ENCODE measurements at regions of chr12 and their contacts with region 1.

Region 1: GRCh38 chr12:107093417-107094182 is at the start of gene CRY1:
- DNase-seq: peak; percentile 85 to 99 (median 92)
- ATAC-seq: peak; percentile 82 to 84
- H3K4me3 Mint-ChIP-seq: no peak within 1 kb of the TSS
- H3K27ac Mint-ChIP-seq: peak within 1 kb of the TSS in 1 of 10 donors; percentile 100
- H3K4me1 Mint-ChIP-seq: peaks cover 0 to 20% (median 13%) of the 10 kb centered on the region in 4 donors
- H3K27me3 Mint-ChIP-seq: peaks cover 3 to 16% (median 9%) of the 10 kb centered on the region in 5 donors
- polyA plus RNA-seq, gene CRY1: 26.1 to 30.7 (median 26.5) TPM

Region 2: DNA sequence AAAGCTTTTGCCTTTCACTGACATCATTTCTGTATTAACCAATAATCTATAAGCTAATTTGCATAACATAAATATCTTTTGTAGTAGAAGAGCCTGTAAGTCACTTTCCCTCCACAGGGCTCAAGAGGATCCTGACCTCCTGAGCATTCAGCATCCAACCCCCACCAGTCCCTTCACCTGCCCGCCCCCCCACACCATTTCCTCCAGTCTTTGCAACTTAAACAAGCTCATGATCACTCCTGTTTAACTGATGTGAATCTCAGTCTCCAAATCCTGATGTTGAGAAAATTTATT is 11.8 kb after region 1 on chr12:
- POLR2A ChIA-PET with region 1: interaction called, 14 read pairs
- DNase-seq: no peak
- ATAC-seq: no peak
- H3K4me3 Mint-ChIP-seq: no peak overlapping the region
- H3K27ac Mint-ChIP-seq: no peak overlapping the region
- H3K4me1 Mint-ChIP-seq: peaks cover 0 to 2% (median under 1%) of the 10 kb centered on the region in 4 donors
- H3K27me3 Mint-ChIP-seq: peaks cover 3 to 13% (median 6%) of the 10 kb centered on the region in 5 donors

Measured in naive thymus-derived CD8-positive, alpha-beta T cell (primary cell).